CD8-positive, alpha-beta T cell (primary cell): ENCODE measurements at regions of chr18 and their contacts with region 1.

Region 1: GRCh38 chr18:2655178-2655953 is at the start of gene SMCHD1:
- DNase-seq: peak; percentile 67 to 96 (median 87)
- ATAC-seq: peak; percentile 70
- H3K4me3 ChIP-seq: peak within 1 kb of the TSS; percentile 96 to 97
- H3K4me3 Mint-ChIP-seq: peak within 1 kb of the TSS; percentile 88
- H3K27ac ChIP-seq: peak within 1 kb of the TSS; percentile 97 to 100
- H3K27ac Mint-ChIP-seq: peak within 1 kb of the TSS; percentile 98
- H3K4me1 ChIP-seq: peaks cover 29% of the 10 kb centered on the region
- H3K4me1 Mint-ChIP-seq: peaks cover 48% of the 10 kb centered on the region
- H3K27me3 ChIP-seq: no peaks in the 10 kb centered on the region
- H3K27me3 Mint-ChIP-seq: no peaks in the 10 kb centered on the region
- CTCF ChIP-seq: no peak
- total RNA-seq, gene SMCHD1: 305 to 306 TPM

Region 2: GRCh38 chr18:812376-813171 is 1842.8 kb before region 1 on chr18:
- CTCF ChIA-PET with region 1: no interaction called
- POLR2A ChIA-PET with region 1: no interaction called
- intact Hi-C with region 1: loop called (anchors 5 kb)
- DNase-seq: peak; percentile 55 to 93 (median 79)
- ATAC-seq: peak; percentile 68
- H3K4me3 ChIP-seq: peak overlapping the region; percentile 80 to 90
- H3K4me3 Mint-ChIP-seq: peak overlapping the region; percentile 93
- H3K27ac ChIP-seq: peak overlapping the region; percentile 81 to 98
- H3K27ac Mint-ChIP-seq: peak overlapping the region; percentile 98
- H3K4me1 ChIP-seq: peaks cover 55% of the 10 kb centered on the region
- H3K4me1 Mint-ChIP-seq: peaks cover 71% of the 10 kb centered on the region
- H3K27me3 ChIP-seq: no peaks in the 10 kb centered on the region
- H3K27me3 Mint-ChIP-seq: no peaks in the 10 kb centered on the region
- CTCF ChIP-seq: no peak

Region 3: DNA sequence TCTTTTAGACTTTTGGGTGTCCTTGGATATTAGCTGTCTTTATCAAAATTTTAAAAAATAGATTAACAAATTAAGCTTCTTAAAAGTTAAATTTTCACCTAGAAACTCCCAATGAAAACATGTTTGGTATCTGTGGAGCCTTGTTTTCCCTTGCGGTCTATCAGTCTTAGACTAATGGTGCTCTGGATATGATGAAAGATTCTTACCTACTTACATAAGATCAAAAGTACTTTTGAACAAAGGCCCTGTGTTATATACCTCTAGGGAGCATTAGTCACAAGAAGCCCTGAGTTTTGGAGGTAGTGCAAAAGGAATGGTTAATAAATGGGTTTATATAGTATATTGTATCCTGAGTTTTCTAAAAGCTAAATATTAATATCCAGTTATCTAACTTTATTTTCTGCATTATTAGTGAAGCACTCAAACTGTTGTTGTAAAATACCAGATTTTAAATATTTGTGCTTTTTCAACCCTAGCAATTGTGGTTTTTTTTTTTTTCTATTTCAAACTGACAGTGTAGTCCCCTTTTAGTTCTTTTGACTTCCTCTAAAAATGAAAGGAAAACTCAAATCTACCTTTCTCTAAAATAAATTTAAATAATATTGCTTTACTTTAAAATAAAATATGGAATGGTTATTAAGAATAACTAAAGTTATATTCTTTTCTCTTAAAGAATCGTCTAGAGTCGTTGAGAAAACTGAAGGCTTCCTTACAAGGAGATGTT is 65.9 kb before region 1 on chr18:
- CTCF ChIA-PET with region 1: interaction called, 7 read pairs
- POLR2A ChIA-PET with region 1: interaction called, 53 read pairs
- intact Hi-C with region 1: loop called in 1 of 2 experiments (anchors 1 kb)
- DNase-seq: peak in 2 of 9 experiments; percentile 28 to 62
- ATAC-seq: peak; percentile 76
- H3K4me3 ChIP-seq: peak overlapping the region; percentile 38 to 50
- H3K4me3 Mint-ChIP-seq: peak overlapping the region; percentile 71
- H3K27ac ChIP-seq: peak overlapping the region; percentile 42 to 92
- H3K27ac Mint-ChIP-seq: peak overlapping the region; percentile 92
- H3K4me1 ChIP-seq: peaks cover 46% of the 10 kb centered on the region
- H3K4me1 Mint-ChIP-seq: peaks cover 53% of the 10 kb centered on the region
- H3K27me3 ChIP-seq: no peaks in the 10 kb centered on the region
- H3K27me3 Mint-ChIP-seq: no peaks in the 10 kb centered on the region
- CTCF ChIP-seq: no peak

Region 4: DNA sequence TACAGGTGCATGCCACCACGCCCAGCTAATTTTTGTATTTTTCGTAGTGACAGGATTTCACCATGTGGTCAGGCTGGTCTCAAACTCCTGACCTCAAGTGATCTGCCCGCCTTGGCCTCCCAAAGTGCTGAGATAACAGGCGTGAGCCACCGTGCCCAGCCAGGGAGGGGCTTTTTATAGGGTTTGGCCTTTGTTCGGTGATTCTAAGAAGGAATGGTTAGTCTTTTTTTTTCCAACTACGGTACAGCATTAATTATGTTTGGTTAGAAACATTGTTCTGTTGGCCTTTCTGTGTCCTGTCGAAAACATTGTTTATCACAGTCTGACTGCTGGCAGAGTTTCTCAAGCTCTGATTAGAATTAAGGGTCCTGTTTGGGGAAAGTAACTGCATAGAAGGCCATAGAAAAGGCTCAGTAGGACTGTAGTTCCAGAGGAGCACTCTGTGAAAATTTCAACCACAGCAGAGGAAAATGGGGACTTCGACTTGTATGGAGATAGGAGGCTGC is 19.2 kb before region 1 on chr18:
- CTCF ChIA-PET with region 1: interaction called, 20 read pairs
- POLR2A ChIA-PET with region 1: interaction called, 232 read pairs
- intact Hi-C with region 1: loop called (anchors 1 kb)
- DNase-seq: peak in 2 of 9 experiments; percentile 22 to 65
- ATAC-seq: peak; percentile 43
- H3K4me3 ChIP-seq: peak overlapping the region; percentile 41 to 44
- H3K4me3 Mint-ChIP-seq: peak overlapping the region; percentile 83
- H3K27ac ChIP-seq: peak overlapping the region; percentile 92 to 95
- H3K27ac Mint-ChIP-seq: peak overlapping the region; percentile 100
- H3K4me1 ChIP-seq: peaks cover 64% of the 10 kb centered on the region
- H3K4me1 Mint-ChIP-seq: peaks cover 88% of the 10 kb centered on the region
- H3K27me3 ChIP-seq: no peaks in the 10 kb centered on the region
- H3K27me3 Mint-ChIP-seq: no peaks in the 10 kb centered on the region
- CTCF ChIP-seq: no peak

Region 5: GRCh38 chr18:2680216-2680792 is 24.9 kb after region 1 on chr18:
- CTCF ChIA-PET with region 1: interaction called, 4 read pairs
- POLR2A ChIA-PET with region 1: interaction called, 9 read pairs
- intact Hi-C with region 1: loop called in 1 of 2 experiments (anchors 2 kb)
- DNase-seq: no peak
- ATAC-seq: no peak
- H3K4me3 ChIP-seq: no peak overlapping the region
- H3K4me3 Mint-ChIP-seq: no peak overlapping the region
- H3K27ac ChIP-seq: peak overlapping the region in 1 of 2 experiments; percentile 27
- H3K27ac Mint-ChIP-seq: no peak overlapping the region
- H3K4me1 ChIP-seq: peaks cover 32% of the 10 kb centered on the region
- H3K4me1 Mint-ChIP-seq: peaks cover 62% of the 10 kb centered on the region
- H3K27me3 ChIP-seq: no peaks in the 10 kb centered on the region
- H3K27me3 Mint-ChIP-seq: no peaks in the 10 kb centered on the region
- CTCF ChIP-seq: no peak

Region 6: DNA sequence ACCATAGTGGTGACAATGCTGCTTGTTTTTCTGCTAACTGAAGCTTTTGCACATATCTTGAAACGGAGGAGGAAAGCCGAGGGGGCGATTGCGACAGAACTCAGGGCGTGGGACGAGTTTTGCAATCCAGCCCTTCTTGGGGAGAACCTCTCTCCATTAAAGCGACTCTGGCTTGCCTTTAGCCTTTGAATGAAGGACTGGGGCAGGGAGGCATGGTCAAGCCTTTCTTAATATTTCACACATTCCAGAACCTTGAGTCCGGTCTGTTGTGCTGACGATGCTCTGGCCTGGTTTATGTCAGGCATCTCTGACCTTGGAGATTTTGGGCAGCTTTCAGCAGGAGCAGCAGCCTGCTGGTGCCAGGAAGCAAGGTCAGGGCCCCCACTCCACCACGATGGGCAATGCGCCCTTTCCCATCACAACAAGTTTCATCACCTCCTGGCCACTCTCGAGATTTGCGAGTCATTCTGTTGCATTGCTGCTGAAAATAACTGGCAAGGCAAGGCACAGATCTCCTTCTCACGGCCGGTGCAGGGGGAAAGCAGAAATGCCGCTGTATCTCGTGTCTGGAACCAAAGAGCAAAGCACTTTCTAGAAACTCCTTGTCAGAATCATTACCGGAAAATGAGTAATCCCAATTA is 202.2 kb after region 1 on chr18:
- CTCF ChIA-PET with region 1: no interaction called
- POLR2A ChIA-PET with region 1: no interaction called
- intact Hi-C with region 1: no loop called
- DNase-seq: peak in 1 of 9 experiments; percentile 28
- ATAC-seq: no peak
- H3K4me3 ChIP-seq: no peak overlapping the region
- H3K4me3 Mint-ChIP-seq: no peak overlapping the region
- H3K27ac ChIP-seq: no peak overlapping the region
- H3K27ac Mint-ChIP-seq: no peak overlapping the region
- H3K4me1 ChIP-seq: no peaks in the 10 kb centered on the region
- H3K4me1 Mint-ChIP-seq: peaks cover 5% of the 10 kb centered on the region
- H3K27me3 ChIP-seq: no peaks in the 10 kb centered on the region
- H3K27me3 Mint-ChIP-seq: peaks cover 7% of the 10 kb centered on the region
- CTCF ChIP-seq: no peak

Region 7: DNA sequence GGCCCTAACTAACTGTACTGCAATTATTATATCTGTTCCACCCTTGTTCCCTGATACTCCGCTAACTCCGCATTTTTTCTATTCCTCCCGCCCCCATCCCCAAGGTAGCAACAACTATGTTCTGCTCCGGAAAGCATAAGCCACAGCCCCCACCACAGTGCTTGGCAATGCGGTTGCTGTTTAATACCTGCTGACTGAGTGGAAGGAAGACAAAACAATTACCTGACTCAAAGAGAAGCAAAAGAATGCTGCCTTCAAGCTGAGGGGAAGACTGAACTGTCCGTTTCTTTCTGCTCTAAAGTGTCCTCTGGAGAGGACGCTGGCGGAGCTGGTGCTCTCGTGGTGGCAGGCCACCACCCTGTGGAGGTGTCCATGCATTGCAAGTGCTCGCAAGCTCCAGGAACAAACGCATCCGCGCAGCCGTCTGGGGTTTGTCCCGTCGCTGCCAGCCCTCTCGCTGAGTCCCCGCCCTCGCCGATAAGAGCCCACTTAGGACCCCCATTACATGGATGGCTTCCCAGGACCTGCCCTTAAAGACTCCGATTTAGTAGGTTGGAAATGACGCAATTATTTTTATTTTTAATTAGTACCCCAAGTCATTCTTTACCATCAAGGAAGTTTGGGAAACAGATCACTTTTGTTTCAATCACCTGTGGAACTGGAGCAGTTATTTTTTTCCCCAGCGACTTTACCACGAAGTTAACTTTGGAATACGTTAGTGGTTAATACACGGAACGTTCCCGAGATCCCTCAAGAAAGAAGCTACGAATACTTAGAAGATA is 590.7 kb after region 1 on chr18:
- CTCF ChIA-PET with region 1: no interaction called
- POLR2A ChIA-PET with region 1: interaction called, 5 read pairs
- intact Hi-C with region 1: loop called (anchors 5 kb)
- DNase-seq: peak; percentile 44 to 89 (median 78)
- ATAC-seq: peak; percentile 60
- H3K4me3 ChIP-seq: peak overlapping the region; percentile 77 to 90
- H3K4me3 Mint-ChIP-seq: peak overlapping the region; percentile 92
- H3K27ac ChIP-seq: peak overlapping the region; percentile 79 to 89
- H3K27ac Mint-ChIP-seq: peak overlapping the region; percentile 90
- H3K4me1 ChIP-seq: peaks cover 11% of the 10 kb centered on the region
- H3K4me1 Mint-ChIP-seq: peaks cover 39% of the 10 kb centered on the region
- H3K27me3 ChIP-seq: no peaks in the 10 kb centered on the region
- H3K27me3 Mint-ChIP-seq: no peaks in the 10 kb centered on the region
- CTCF ChIP-seq: peak; percentile 84

Region 8: GRCh38 chr18:3593904-3594661 is 938.7 kb after region 1 on chr18:
- CTCF ChIA-PET with region 1: no interaction called
- POLR2A ChIA-PET with region 1: no interaction called
- intact Hi-C with region 1: loop called in 1 of 2 experiments (anchors 10 kb)
- DNase-seq: peak; percentile 82 to 97 (median 89)
- ATAC-seq: peak; percentile 81
- H3K4me3 ChIP-seq: peak overlapping the region; percentile 67
- H3K4me3 Mint-ChIP-seq: peak overlapping the region; percentile 91
- H3K27ac ChIP-seq: peak overlapping the region; percentile 93 to 99
- H3K27ac Mint-ChIP-seq: peak overlapping the region; percentile 99
- H3K4me1 ChIP-seq: peaks cover 41% of the 10 kb centered on the region
- H3K4me1 Mint-ChIP-seq: peaks cover 50% of the 10 kb centered on the region
- H3K27me3 ChIP-seq: no peaks in the 10 kb centered on the region
- H3K27me3 Mint-ChIP-seq: no peaks in the 10 kb centered on the region
- CTCF ChIP-seq: peak; percentile 80